Dorsolateral prefrontal cortex (tissue), 120 donors: ENCODE measurements at regions of chr2 and their contacts with region 1.

Region 1: DNA sequence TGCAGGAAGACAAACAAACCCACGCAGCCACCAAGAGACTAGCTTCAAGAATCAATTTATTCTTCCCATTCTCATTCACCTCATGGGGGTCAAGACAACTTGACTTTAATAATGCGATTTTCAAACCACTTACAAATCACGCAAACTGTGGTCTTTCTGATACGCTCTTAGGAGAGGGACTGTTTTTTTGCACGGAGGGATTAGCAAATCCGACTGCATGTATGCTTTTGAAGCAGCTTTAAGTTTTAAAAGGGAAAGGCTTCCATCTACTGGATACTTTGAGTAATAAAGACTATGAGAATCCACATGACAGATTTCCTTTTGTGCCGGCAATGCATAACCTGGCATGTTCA is 322.9 kb upstream of the KCNJ3 start:
- DNase-seq: peak in 2 of 10 donors; percentile 10 to 11
- H3K4me3 ChIP-seq: peak overlapping the region in 56 of 59 donors; percentile 10 to 61 (median 38)
- H3K27ac ChIP-seq: peak overlapping the region in 13 of 59 donors; percentile 6 to 52 (median 20)
- H3K27me3 ChIP-seq: no peaks in the 10 kb centered on the region
- CTCF ChIP-seq: peak in 55 of 56 donors; percentile 45 to 85 (median 70)

Region 2: GRCh38 chr2:153163058-153163457 is 1212.5 kb before region 1 on chr2:
- intact Hi-C with region 1: loop called in 1 of 2 experiments (anchors 10 kb)
- DNase-seq: peak in 1 of 10 donors; percentile 3
- H3K4me3 ChIP-seq: no peak overlapping the region
- H3K27ac ChIP-seq: no peak overlapping the region
- H3K27me3 ChIP-seq: no peaks in the 10 kb centered on the region
- CTCF ChIP-seq: peak; percentile 25 to 71 (median 52)

Region 3: DNA sequence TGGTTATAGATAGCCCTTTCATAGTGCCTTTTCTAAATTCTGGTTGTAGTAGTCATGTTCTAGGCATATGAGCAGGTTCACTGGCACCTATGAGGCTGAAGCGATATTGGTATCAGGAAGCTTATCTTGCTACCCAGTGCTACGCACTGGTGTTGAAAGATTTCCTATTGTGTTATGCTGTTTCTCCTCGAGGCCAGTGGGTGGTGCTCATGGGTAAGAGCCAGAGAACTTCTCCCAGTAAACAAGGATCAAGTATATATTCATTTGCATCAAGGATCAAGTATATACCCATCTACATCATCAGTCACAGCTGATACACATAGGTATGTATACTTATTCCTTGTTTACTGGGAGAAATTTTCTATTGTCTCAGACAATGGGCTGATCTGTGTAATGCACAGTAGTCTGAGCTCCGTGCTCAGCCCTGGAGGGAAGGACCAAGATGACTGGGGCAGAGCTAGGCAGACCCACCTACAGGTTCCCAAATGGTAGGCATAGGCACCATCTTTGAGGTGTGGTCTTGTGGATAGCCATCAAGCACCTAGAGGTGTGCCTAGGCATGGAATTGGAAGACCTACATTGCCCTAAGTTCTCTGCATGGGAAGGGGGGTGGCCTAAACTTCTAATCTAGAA is 605.1 kb before region 1 on chr2:
- intact Hi-C with region 1: loop called (anchors 2 to 10 kb)
- DNase-seq: no peak
- H3K4me3 ChIP-seq: no peak overlapping the region
- H3K27ac ChIP-seq: no peak overlapping the region
- H3K27me3 ChIP-seq: peaks cover 0 to 5% (median 0%) of the 10 kb centered on the region in 45 donors
- CTCF ChIP-seq: peak in 50 of 56 donors; percentile 19 to 74 (median 50)